Activated T-helper 1 cell treated with anti-CD3 and anti-CD28 coated beads, Interleukin-12 subunit alpha, Interleukin-12 subunit beta, Interleukin-2, Interleukin-4 antibody, amounts not matched to agents 30 ng/mL and 10 ng/mL and 1 ng/mL, durations not matched to agents 14 hours and 24 hours and 36 hours (primary cell): ENCODE measurements at regions of chr3 and their contacts with region 1.

Region 1: GRCh38 chr3:12224181-12225147 is 64.4 kb upstream of the PPARG start:
- DNase-seq: no peak
- H3K4me3 Mint-ChIP-seq: no peak overlapping the region
- H3K27ac Mint-ChIP-seq: no peak overlapping the region
- H3K4me1 Mint-ChIP-seq: no peaks in the 10 kb centered on the region
- H3K27me3 Mint-ChIP-seq: peaks cover 7% of the 10 kb centered on the region

Region 2: GRCh38 chr3:12180218-12180617 is 44.2 kb before region 1 on chr3:
- intact Hi-C with region 1: no loop called
- DNase-seq: no peak
- H3K4me3 Mint-ChIP-seq: no peak overlapping the region
- H3K27ac Mint-ChIP-seq: peak overlapping the region; percentile 18
- H3K4me1 Mint-ChIP-seq: peaks cover 85% of the 10 kb centered on the region
- H3K27me3 Mint-ChIP-seq: peaks cover 2% of the 10 kb centered on the region

Region 3: GRCh38 chr3:12201813-12202212 is 22.7 kb before region 1 on chr3:
- intact Hi-C with region 1: loop called (anchors 2 kb)
- DNase-seq: no peak
- H3K4me3 Mint-ChIP-seq: no peak overlapping the region
- H3K27ac Mint-ChIP-seq: no peak overlapping the region
- H3K4me1 Mint-ChIP-seq: peaks cover 19% of the 10 kb centered on the region
- H3K27me3 Mint-ChIP-seq: peaks cover 4% of the 10 kb centered on the region

Region 4: DNA sequence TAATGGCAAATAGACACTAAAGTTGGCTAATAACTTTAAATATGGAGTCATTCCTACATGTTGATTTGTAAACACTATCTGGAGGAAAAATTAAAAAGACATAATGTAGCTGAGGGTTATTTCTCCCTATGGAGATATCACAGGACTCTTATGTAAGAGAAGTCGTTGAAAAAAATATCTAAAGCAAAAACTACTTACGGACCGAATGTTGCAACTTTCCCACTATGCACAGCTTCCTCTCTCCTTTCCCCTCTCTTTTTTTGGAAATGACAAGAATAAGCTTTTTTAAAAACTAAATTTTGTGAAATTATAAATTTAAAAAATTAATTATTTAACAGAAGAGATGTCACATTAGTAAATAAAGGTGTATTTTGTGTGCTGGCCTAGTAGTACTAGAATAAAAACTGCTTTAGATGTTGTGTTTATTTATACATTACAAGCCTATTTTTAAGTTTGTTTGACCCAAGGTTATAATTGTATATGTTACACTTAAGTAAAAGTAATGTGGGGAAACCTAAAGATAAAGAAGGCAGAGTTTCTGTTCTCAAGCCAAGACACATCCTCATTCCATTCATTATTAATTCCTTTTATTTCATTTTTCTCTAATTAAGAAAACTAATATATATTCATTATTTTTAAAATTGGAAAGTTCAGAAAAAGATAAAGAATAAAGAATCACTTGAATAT is 43.7 kb after region 1 on chr3:
- intact Hi-C with region 1: loop called (anchors 5 kb)
- DNase-seq: no peak
- H3K4me3 Mint-ChIP-seq: no peak overlapping the region
- H3K27ac Mint-ChIP-seq: no peak overlapping the region
- H3K4me1 Mint-ChIP-seq: no peaks in the 10 kb centered on the region
- H3K27me3 Mint-ChIP-seq: peaks cover 25% of the 10 kb centered on the region

Region 5: DNA sequence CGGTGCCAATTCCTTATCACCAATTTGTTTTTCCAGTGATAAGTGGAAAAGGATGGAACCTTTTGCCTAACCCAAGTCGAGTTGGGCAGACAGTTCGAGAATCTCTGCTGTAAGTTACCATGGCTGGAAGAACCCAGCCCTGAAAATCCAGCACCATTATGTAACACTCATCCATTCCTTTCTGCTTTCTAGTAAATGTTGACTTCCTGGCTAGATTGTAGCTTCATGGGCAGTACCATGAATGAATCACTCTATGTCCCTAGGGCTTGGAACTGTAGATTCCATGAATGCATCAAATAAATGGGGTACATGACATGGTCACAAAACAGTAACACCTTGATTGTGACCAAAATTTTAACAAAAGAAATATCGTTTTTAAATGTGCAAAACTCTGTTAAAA is 1886.2 kb after region 1 on chr3:
- intact Hi-C with region 1: no loop called
- DNase-seq: no peak
- H3K4me3 Mint-ChIP-seq: no peak overlapping the region
- H3K27ac Mint-ChIP-seq: no peak overlapping the region
- H3K4me1 Mint-ChIP-seq: no peaks in the 10 kb centered on the region
- H3K27me3 Mint-ChIP-seq: peaks cover 8% of the 10 kb centered on the region